ENCODE measurements at regions of chr15 and their contacts with region 1.

Region 1: GRCh38 chr15:84748274-84749110 is at the start of gene ZNF592:
- DNase-seq: peak in 1 of 2 experiments; percentile 82
- H3K4me3 ChIP-seq: peak within 1 kb of the TSS; percentile 91
- H3K27ac ChIP-seq: peak within 1 kb of the TSS; percentile 79
- H3K4me1 ChIP-seq: peaks cover 39% of the 10 kb centered on the region
- H3K27me3 ChIP-seq: no peaks in the 10 kb centered on the region
- CTCF ChIP-seq: no peak; the same call in 1 of the 2 replicates
- total RNA-seq, gene ZNF592: 20.8 and 27.5 TPM in 2 replicates

Region 2: GRCh38 chr15:84633311-84634227 is 114.9 kb before region 1 on chr15:
- CTCF ChIA-PET with region 1: interaction called, 10 read pairs
- POLR2A ChIA-PET with region 1: no interaction called
- intact Hi-C with region 1: no loop called
- DNase-seq: peak; percentile 46 to 63
- H3K4me3 ChIP-seq: peak overlapping the region; percentile 70
- H3K27ac ChIP-seq: no peak overlapping the region
- H3K4me1 ChIP-seq: peaks cover 33% of the 10 kb centered on the region
- H3K27me3 ChIP-seq: no peaks in the 10 kb centered on the region
- CTCF ChIP-seq: no peak

Region 3: GRCh38 chr15:84658080-84658787 is 90.3 kb before region 1 on chr15 and contains the start of gene NMB:
- CTCF ChIA-PET with region 1: interaction called, 8 read pairs
- POLR2A ChIA-PET with region 1: no interaction called
- intact Hi-C with region 1: loop called (anchors 5 kb)
- DNase-seq: peak; percentile 70 to 88
- H3K4me3 ChIP-seq: peak within 1 kb of the TSS; percentile 70
- H3K27ac ChIP-seq: peak within 1 kb of the TSS; percentile 83
- H3K4me1 ChIP-seq: peaks cover 23% of the 10 kb centered on the region
- H3K27me3 ChIP-seq: no peaks in the 10 kb centered on the region
- CTCF ChIP-seq: peak; percentile 73
- total RNA-seq, gene NMB: 66.7 and 77.1 TPM in 2 replicates

Region 4: DNA sequence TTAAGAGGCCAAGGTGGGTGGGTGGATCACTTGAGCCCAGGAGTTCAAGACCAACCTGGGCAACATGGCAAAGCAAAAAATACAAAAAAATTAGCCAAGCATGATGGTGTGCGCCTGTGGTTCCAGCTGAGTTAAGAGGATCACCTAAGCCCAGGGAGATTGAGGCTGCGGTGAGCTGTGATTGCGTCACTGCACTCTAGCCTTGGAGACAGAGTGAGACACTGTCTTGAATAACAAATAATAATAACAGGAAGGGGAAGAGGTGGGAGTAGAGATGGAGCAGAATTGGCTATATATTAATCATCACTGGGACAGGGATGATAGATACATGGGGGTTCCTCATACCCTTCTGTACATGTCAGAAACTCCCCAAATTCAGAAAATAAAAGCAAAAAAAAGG is 66.7 kb before region 1 on chr15:
- CTCF ChIA-PET with region 1: no interaction called
- POLR2A ChIA-PET with region 1: no interaction called
- intact Hi-C with region 1: no loop called
- DNase-seq: no peak
- H3K4me3 ChIP-seq: no peak overlapping the region
- H3K27ac ChIP-seq: no peak overlapping the region
- H3K4me1 ChIP-seq: peaks cover 19% of the 10 kb centered on the region
- H3K27me3 ChIP-seq: no peaks in the 10 kb centered on the region
- CTCF ChIP-seq: no peak

Region 5: DNA sequence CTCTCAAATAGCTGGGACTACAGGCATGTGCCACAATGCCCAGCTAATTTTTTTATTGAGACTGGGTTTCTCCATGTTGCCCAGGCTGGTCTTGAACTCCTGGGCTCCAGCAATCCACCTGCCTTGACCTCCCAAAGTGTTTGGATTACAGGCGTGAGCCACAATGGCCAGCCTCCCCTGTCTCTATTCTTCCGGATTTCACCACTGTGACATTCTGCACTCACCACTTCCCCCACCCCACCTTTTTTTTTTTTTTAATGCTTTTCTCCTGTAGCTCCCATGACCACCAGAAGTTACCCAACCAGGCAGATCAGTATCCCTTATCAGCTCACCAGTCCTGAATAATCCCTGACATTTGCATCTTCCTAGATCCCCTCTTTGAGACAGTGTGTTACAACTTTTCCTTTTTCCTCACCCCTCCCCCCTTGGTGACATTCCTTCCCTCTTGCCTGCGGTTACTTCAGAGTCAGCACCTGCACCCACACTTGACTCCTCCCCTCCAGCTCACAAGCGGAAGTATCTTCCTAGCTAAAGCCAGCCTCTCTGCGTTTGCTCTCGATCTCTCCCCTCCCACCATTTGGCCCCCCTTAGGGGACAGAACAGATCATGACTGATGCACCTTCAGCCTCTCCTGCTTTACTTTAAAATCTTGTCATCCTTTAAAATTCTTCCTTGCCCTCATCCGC is 13.6 kb before region 1 on chr15:
- CTCF ChIA-PET with region 1: interaction called, 6 read pairs
- POLR2A ChIA-PET with region 1: interaction called, 4 read pairs
- intact Hi-C with region 1: loop called (anchors 2 kb)
- DNase-seq: peak; percentile 84 to 94
- H3K4me3 ChIP-seq: peak overlapping the region; percentile 41; the same call in 1 of the 2 replicates
- H3K27ac ChIP-seq: peak overlapping the region; percentile 95
- H3K4me1 ChIP-seq: peaks cover 45% of the 10 kb centered on the region
- H3K27me3 ChIP-seq: no peaks in the 10 kb centered on the region
- CTCF ChIP-seq: no peak

Region 6: GRCh38 chr15:85174521-85174920 is 426.0 kb after region 1 on chr15:
- CTCF ChIA-PET with region 1: interaction called, 16 read pairs
- POLR2A ChIA-PET with region 1: no interaction called
- intact Hi-C with region 1: no loop called
- DNase-seq: no peak
- H3K4me3 ChIP-seq: no peak overlapping the region
- H3K27ac ChIP-seq: no peak overlapping the region
- H3K4me1 ChIP-seq: peaks cover 13% of the 10 kb centered on the region
- H3K27me3 ChIP-seq: no peaks in the 10 kb centered on the region
- CTCF ChIP-seq: no peak